ENCODE measurements at regions of chr9 and their contacts with region 1.

Region 1: GRCh38 chr9:112379177-112380101 is 469 bp upstream of the HSDL2 start:
- DNase-seq: peak; percentile 99
- H3K4me3 Mint-ChIP-seq: peak overlapping the region; percentile 93
- H3K27ac Mint-ChIP-seq: peak overlapping the region; percentile 95
- H3K4me1 Mint-ChIP-seq: peaks cover 45% of the 10 kb centered on the region
- H3K27me3 Mint-ChIP-seq: no peaks in the 10 kb centered on the region

Region 2: GRCh38 chr9:112097712-112098688 is 281.4 kb before region 1 on chr9:
- CTCF ChIA-PET with region 1: interaction called, 11 read pairs
- POLR2A ChIA-PET with region 1: interaction called, 9 read pairs
- DNase-seq: peak; percentile 74
- H3K4me3 Mint-ChIP-seq: no peak overlapping the region
- H3K27ac Mint-ChIP-seq: no peak overlapping the region
- H3K4me1 Mint-ChIP-seq: peaks cover 37% of the 10 kb centered on the region
- H3K27me3 Mint-ChIP-seq: no peaks in the 10 kb centered on the region

Region 3: DNA sequence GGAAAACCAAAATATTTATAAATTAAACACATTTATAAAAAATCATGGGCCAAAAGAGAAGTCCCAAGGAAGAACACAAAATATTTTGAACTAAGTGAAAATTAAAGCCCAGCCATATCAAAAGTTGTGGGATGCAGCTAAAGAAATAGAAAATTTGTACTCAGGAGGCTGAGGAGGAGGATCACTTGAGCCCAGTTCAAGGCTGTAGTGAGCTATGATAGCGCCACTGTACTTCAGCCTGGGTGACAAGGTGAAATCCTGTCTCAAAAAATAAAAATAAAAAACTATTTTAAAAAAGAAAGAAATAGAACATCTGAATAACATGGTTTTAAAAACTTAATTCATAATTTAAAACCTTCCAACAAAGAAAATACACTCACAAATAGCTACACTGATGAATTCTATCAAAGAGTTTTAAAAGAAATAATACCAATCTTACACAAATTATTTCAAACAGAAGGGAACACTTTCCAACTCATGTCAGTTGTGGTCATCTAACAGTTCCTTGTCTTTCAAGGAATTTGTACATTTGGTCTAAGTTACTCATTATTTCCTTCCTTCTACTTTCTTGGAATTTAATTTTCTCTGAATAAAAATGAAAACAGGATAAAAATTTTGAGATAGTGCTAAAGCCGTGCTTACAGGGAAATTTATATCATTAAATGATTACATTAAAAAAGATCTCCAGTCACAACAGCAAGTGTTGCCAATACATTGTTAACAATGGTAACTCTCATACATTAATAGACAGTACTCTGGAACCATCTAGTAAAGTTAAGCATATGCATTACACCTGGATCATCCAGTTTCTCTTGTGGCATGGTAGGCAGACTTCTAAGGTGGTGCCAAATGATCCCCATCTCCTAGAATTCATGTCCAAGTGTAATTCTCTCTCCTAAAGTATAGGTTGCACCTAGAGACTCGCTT is 63.8 kb before region 1 on chr9:
- CTCF ChIA-PET with region 1: interaction called, 4 read pairs
- POLR2A ChIA-PET with region 1: interaction called, 17 read pairs
- DNase-seq: no peak
- H3K4me3 Mint-ChIP-seq: peak overlapping the region; percentile 42
- H3K27ac Mint-ChIP-seq: peak overlapping the region; percentile 81
- H3K4me1 Mint-ChIP-seq: peaks cover 70% of the 10 kb centered on the region
- H3K27me3 Mint-ChIP-seq: no peaks in the 10 kb centered on the region

Region 4: DNA sequence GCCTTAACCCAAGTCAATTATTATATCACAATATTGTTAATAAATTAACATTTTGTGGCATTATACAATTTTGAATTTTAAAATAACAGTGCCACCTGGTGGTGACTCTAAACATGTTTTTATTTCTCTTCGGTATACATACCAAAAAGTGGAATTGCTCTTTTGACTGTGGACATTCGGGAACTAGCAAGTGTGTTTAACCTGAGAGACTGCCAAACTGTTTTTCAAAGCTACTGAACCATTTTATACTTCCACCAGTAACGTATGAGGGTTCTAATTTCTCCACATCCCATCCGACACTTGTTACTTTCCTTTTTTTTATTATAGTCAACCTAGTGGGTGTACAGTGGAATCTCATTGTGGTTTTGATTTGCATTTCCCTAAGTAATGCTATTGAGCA is 17.8 kb before region 1 on chr9:
- CTCF ChIA-PET with region 1: interaction called, 21 read pairs
- POLR2A ChIA-PET with region 1: interaction called, 16 read pairs
- DNase-seq: no peak
- H3K4me3 Mint-ChIP-seq: no peak overlapping the region
- H3K27ac Mint-ChIP-seq: no peak overlapping the region
- H3K4me1 Mint-ChIP-seq: peaks cover 8% of the 10 kb centered on the region
- H3K27me3 Mint-ChIP-seq: peaks cover 9% of the 10 kb centered on the region

Region 5: GRCh38 chr9:112421771-112422222 is 42.4 kb after region 1 on chr9:
- CTCF ChIA-PET with region 1: no interaction called
- POLR2A ChIA-PET with region 1: no interaction called
- DNase-seq: no peak
- H3K4me3 Mint-ChIP-seq: no peak overlapping the region
- H3K27ac Mint-ChIP-seq: no peak overlapping the region
- H3K4me1 Mint-ChIP-seq: no peaks in the 10 kb centered on the region
- H3K27me3 Mint-ChIP-seq: no peaks in the 10 kb centered on the region

Region 6: DNA sequence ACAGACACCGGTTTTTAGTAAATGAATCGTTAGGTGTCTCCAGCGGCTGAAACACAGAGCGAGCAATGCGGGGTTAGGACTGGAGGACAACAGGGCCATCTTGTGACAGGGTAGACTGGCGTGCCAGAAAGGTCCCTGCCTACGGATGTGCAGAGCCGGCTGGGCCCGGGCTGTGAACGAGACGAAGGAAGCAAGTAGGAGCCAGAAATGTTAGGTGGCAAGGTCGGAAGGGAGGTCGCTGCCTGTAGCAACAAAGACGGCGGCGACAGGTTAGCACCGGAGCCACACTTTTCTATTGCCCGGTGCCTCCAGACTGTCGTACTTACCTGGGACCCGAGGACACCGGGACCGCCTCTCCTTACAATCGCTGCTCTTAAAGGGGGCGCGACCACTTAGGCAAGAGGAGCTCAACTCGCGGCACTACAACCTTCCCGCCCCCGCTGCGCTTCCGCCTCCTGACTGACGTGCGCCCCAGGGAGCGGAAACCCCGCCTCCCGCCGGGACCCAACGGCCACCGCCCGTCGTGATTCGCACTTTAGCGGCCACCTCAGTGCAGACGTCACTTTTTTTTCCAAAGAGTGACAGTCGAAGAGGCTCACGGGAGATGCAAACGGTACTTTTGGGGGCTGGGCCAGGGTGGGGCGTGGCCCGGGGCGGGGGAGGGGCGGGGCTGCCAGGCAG is 338.4 kb after region 1 on chr9 and contains the start of gene INIP:
- CTCF ChIA-PET with region 1: interaction called, 8 read pairs
- POLR2A ChIA-PET with region 1: interaction called, 18 read pairs
- DNase-seq: peak; percentile 98
- H3K4me3 Mint-ChIP-seq: peak within 1 kb of the TSS; percentile 94
- H3K27ac Mint-ChIP-seq: peak within 1 kb of the TSS; percentile 99
- H3K4me1 Mint-ChIP-seq: peaks cover 43% of the 10 kb centered on the region
- H3K27me3 Mint-ChIP-seq: no peaks in the 10 kb centered on the region
- total RNA-seq, gene INIP: 36.1 to 38.1 TPM

Measured in activated CD4-positive, alpha-beta memory T cell treated with anti-CD3 and anti-CD28 coated beads, Interleukin-2, amount 10 ng/mL, durations not matched to agents 7 days and 5 days (primary cell).